ENCODE measurements at regions of chr9 and their contacts with region 1.

Region 1: GRCh38 chr9:129080602-129081387 is at the start of gene DOLPP1:
- DNase-seq: peak; percentile 96 to 99 (median 99)
- ATAC-seq: peak; percentile 97
- H3K4me3 ChIP-seq: peak within 1 kb of the TSS; percentile 82
- H3K4me3 Mint-ChIP-seq: peak within 1 kb of the TSS; percentile 88 to 94 (median 90)
- H3K27ac ChIP-seq: peak within 1 kb of the TSS; percentile 79
- H3K27ac Mint-ChIP-seq: peak within 1 kb of the TSS; percentile 69 to 93 (median 87)
- H3K4me1 ChIP-seq: peaks cover 19 to 20% of the 10 kb centered on the region in 2 donors
- H3K4me1 Mint-ChIP-seq: peaks cover 6 to 41% (median 26%) of the 10 kb centered on the region in 7 donors
- H3K27me3 ChIP-seq: no peaks in the 10 kb centered on the region
- H3K27me3 Mint-ChIP-seq: no peaks in the 10 kb centered on the region
- total RNA-seq, gene DOLPP1: 5.7 to 17.1 (median 11.9) TPM

Region 2: GRCh38 chr9:129028192-129028957 is 52.4 kb before region 1 on chr9 and contains the start of gene SH3GLB2:
- CTCF ChIA-PET with region 1: no interaction called
- POLR2A ChIA-PET with region 1: interaction called, 6 read pairs
- intact Hi-C with region 1: loop called (anchors 1 to 2 kb)
- DNase-seq: peak in 8 of 9 donors; percentile 81 to 97 (median 88)
- ATAC-seq: peak; percentile 94
- H3K4me3 ChIP-seq: peak within 1 kb of the TSS; percentile 76
- H3K4me3 Mint-ChIP-seq: peak within 1 kb of the TSS; percentile 81 to 92 (median 83)
- H3K27ac ChIP-seq: peak within 1 kb of the TSS; percentile 72
- H3K27ac Mint-ChIP-seq: peak within 1 kb of the TSS; percentile 62 to 90 (median 78)
- H3K4me1 ChIP-seq: peaks cover 13 to 18% of the 10 kb centered on the region in 2 donors
- H3K4me1 Mint-ChIP-seq: peaks cover 13 to 37% (median 25%) of the 10 kb centered on the region in 7 donors
- H3K27me3 ChIP-seq: no peaks in the 10 kb centered on the region
- H3K27me3 Mint-ChIP-seq: no peaks in the 10 kb centered on the region
- total RNA-seq, gene SH3GLB2: 76.3 to 106 (median 86.2) TPM

Region 3: GRCh38 chr9:129036241-129036922 is 44.4 kb before region 1 on chr9 and contains the start of gene MIGA2:
- CTCF ChIA-PET with region 1: no interaction called
- POLR2A ChIA-PET with region 1: interaction called, 4 read pairs
- intact Hi-C with region 1: loop called (anchors 1 kb)
- DNase-seq: peak; percentile 78 to 93 (median 90)
- ATAC-seq: peak; percentile 99
- H3K4me3 ChIP-seq: peak within 1 kb of the TSS; percentile 87
- H3K4me3 Mint-ChIP-seq: peak within 1 kb of the TSS; percentile 90 to 99 (median 94)
- H3K27ac ChIP-seq: peak within 1 kb of the TSS; percentile 72
- H3K27ac Mint-ChIP-seq: peak within 1 kb of the TSS; percentile 56 to 93 (median 87)
- H3K4me1 ChIP-seq: peaks cover 13 to 17% of the 10 kb centered on the region in 2 donors
- H3K4me1 Mint-ChIP-seq: peaks cover 22 to 41% (median 37%) of the 10 kb centered on the region in 7 donors
- H3K27me3 ChIP-seq: no peaks in the 10 kb centered on the region
- H3K27me3 Mint-ChIP-seq: no peaks in the 10 kb centered on the region
- total RNA-seq, gene MIGA2: 50.0 to 73.4 (median 60.7) TPM

Region 4: GRCh38 chr9:129068990-129069861 is 11.6 kb before region 1 on chr9:
- CTCF ChIA-PET with region 1: interaction called, 4 read pairs
- POLR2A ChIA-PET with region 1: interaction called, 8 read pairs
- intact Hi-C with region 1: loop called in 1 of 2 experiments (anchors 1 kb)
- DNase-seq: peak; percentile 37 to 67 (median 55)
- ATAC-seq: peak; percentile 98
- H3K4me3 ChIP-seq: no peak overlapping the region
- H3K4me3 Mint-ChIP-seq: peak overlapping the region; percentile 33 to 84 (median 67)
- H3K27ac ChIP-seq: peak overlapping the region; percentile 37
- H3K27ac Mint-ChIP-seq: peak overlapping the region; percentile 67 to 95 (median 92)
- H3K4me1 ChIP-seq: peaks cover 9 to 41% of the 10 kb centered on the region in 2 donors
- H3K4me1 Mint-ChIP-seq: peaks cover 20 to 46% (median 30%) of the 10 kb centered on the region in 7 donors
- H3K27me3 ChIP-seq: no peaks in the 10 kb centered on the region
- H3K27me3 Mint-ChIP-seq: no peaks in the 10 kb centered on the region

Region 5: GRCh38 chr9:129110740-129111527 is 30.1 kb after region 1 on chr9 and contains the starts of genes CRAT and PTPA:
- CTCF ChIA-PET with region 1: no interaction called
- POLR2A ChIA-PET with region 1: interaction called, 3 read pairs
- intact Hi-C with region 1: loop called (anchors 1 kb)
- DNase-seq: peak; percentile 85 to 96 (median 89)
- ATAC-seq: peak; percentile 93
- H3K4me3 ChIP-seq: peak within 1 kb of the TSS; percentile 82
- H3K4me3 Mint-ChIP-seq: peak within 1 kb of the TSS; percentile 88 to 97 (median 92)
- H3K27ac ChIP-seq: peak within 1 kb of the TSS; percentile 87
- H3K27ac Mint-ChIP-seq: peak within 1 kb of the TSS; percentile 83 to 97 (median 94)
- H3K4me1 ChIP-seq: peaks cover 10% of the 10 kb centered on the region in 2 donors
- H3K4me1 Mint-ChIP-seq: peaks cover 26 to 45% (median 29%) of the 10 kb centered on the region in 7 donors
- H3K27me3 ChIP-seq: no peaks in the 10 kb centered on the region
- H3K27me3 Mint-ChIP-seq: no peaks in the 10 kb centered on the region
- total RNA-seq, gene CRAT: 7.2 to 15.6 (median 11.4) TPM
- total RNA-seq, gene PTPA: 45.0 to 110 (median 52.3) TPM

Region 6: DNA sequence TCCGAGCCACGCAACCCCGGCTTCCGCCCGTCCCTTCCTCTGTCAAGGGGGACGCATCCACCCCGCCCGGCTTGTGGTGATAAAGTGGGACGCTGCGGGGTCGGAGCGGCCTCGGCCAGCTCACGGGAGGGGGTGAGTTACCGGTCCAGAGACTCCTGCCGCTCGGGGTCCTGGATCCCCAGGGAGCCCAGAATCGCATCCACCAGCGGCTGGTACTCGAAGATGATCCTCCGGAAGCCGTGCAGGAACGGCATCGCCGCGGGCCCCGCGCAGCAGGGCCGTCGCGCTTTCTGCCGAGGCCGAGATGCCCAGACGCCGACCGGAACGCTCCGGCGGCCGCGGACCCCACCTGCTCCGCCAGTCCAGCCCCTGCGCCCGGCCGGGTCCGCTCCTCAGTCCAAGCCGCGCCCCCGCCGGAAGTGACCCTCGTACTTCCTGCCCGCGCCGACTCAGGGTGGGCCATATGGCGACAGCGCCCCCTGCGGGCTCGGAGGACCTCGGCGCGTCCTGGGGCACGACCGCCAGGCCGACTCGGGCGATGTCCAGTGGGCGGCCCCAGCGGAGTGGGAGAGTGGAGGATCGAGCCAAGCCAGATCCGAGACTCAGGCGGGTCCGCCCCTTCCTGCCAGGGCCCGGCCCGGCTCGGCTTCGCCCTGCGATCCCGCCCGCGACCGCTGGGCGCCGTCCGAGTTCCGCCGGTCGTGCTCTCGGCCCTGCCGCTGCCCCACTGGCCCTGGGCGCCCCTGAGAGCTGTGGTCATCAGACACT is 561.1 kb after region 1 on chr9 and contains the start of gene ASB6:
- CTCF ChIA-PET with region 1: no interaction called
- POLR2A ChIA-PET with region 1: no interaction called
- intact Hi-C with region 1: loop called in 1 of 2 experiments (anchors 1 kb)
- DNase-seq: peak; percentile 80 to 100 (median 87)
- ATAC-seq: peak; percentile 96
- H3K4me3 ChIP-seq: peak within 1 kb of the TSS; percentile 97
- H3K4me3 Mint-ChIP-seq: peak within 1 kb of the TSS; percentile 81 to 90 (median 86)
- H3K27ac ChIP-seq: peak within 1 kb of the TSS; percentile 80
- H3K27ac Mint-ChIP-seq: peak within 1 kb of the TSS; percentile 80 to 95 (median 89)
- H3K4me1 ChIP-seq: peaks cover 16 to 18% of the 10 kb centered on the region in 2 donors
- H3K4me1 Mint-ChIP-seq: peaks cover 19 to 31% (median 23%) of the 10 kb centered on the region in 7 donors
- H3K27me3 ChIP-seq: no peaks in the 10 kb centered on the region
- H3K27me3 Mint-ChIP-seq: no peaks in the 10 kb centered on the region
- total RNA-seq, gene ASB6: 25.0 to 33.2 (median 28.1) TPM

Region 7: GRCh38 chr9:129802851-129803675 is 722.3 kb after region 1 on chr9 and contains the start of gene TOR1B:
- CTCF ChIA-PET with region 1: no interaction called
- POLR2A ChIA-PET with region 1: no interaction called
- intact Hi-C with region 1: loop called in 1 of 2 experiments (anchors 1 kb)
- DNase-seq: peak; percentile 91 to 97 (median 94)
- ATAC-seq: peak; percentile 97
- H3K4me3 ChIP-seq: peak within 1 kb of the TSS; percentile 73
- H3K4me3 Mint-ChIP-seq: peak within 1 kb of the TSS; percentile 87 to 95 (median 90)
- H3K27ac ChIP-seq: peak within 1 kb of the TSS; percentile 79
- H3K27ac Mint-ChIP-seq: peak within 1 kb of the TSS; percentile 85 to 97 (median 94)
- H3K4me1 ChIP-seq: peaks cover 12 to 20% of the 10 kb centered on the region in 2 donors
- H3K4me1 Mint-ChIP-seq: peaks cover 15 to 34% (median 28%) of the 10 kb centered on the region in 7 donors
- H3K27me3 ChIP-seq: no peaks in the 10 kb centered on the region
- H3K27me3 Mint-ChIP-seq: no peaks in the 10 kb centered on the region
- total RNA-seq, gene TOR1B: 16.2 to 30.9 (median 23.9) TPM

Measured in naive thymus-derived CD4-positive, alpha-beta T cell (primary cell).